HCT116 (cell line): ENCODE measurements at regions of chr5 and their contacts with region 1.

Region 1: GRCh38 chr5:34452170-34452830 is 203.8 kb upstream of the RAI14 start:
- DNase-seq: peak; percentile 34
- ATAC-seq: peak; percentile 63; the same call in 1 of the 2 replicates
- H3K4me3 ChIP-seq: no peak overlapping the region
- H3K27ac ChIP-seq: no peak overlapping the region
- H3K4me1 ChIP-seq: no peaks in the 10 kb centered on the region
- H3K27me3 ChIP-seq: no peaks in the 10 kb centered on the region
- CTCF ChIP-seq: peak; percentile 49 to 70 (median 62)
- POLR2A ChIP-seq: no peak
- RAD21 ChIP-seq: peak; percentile 82

Region 2: DNA sequence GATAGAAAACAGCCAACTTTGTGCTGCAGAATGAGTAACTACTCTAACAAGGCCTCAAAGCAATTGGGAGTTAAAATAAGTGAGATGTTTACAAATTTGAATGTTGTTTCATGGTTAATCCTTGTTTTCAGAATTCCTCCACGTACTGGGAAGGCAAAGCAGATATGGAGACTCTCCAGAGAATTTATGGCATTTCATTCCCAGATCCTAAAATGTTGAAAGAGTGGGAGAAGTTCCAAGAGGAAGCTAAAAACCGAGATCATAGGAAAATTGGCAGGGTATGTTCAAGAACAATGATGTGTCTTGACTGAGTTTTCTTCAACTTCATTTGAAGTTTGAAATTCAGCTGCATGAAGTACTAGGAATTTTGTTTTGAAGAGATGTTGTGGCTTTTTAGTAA is 995.2 kb before region 1 on chr5:
- CTCF ChIA-PET with region 1: no interaction called
- POLR2A ChIA-PET with region 1: no interaction called
- RAD21 ChIA-PET with region 1: no interaction called
- intact Hi-C with region 1: loop called (anchors 10 kb)
- DNase-seq: no peak
- ATAC-seq: no peak
- H3K4me3 ChIP-seq: no peak overlapping the region
- H3K27ac ChIP-seq: no peak overlapping the region
- H3K4me1 ChIP-seq: no peaks in the 10 kb centered on the region
- H3K27me3 ChIP-seq: no peaks in the 10 kb centered on the region
- CTCF ChIP-seq: no peak
- POLR2A ChIP-seq: no peak
- RAD21 ChIP-seq: no peak

Region 3: GRCh38 chr5:33608476-33609041 is 843.7 kb before region 1 on chr5:
- CTCF ChIA-PET with region 1: no interaction called
- POLR2A ChIA-PET with region 1: no interaction called
- RAD21 ChIA-PET with region 1: no interaction called
- intact Hi-C with region 1: loop called (anchors 10 kb)
- DNase-seq: no peak
- ATAC-seq: no peak
- H3K4me3 ChIP-seq: no peak overlapping the region
- H3K27ac ChIP-seq: no peak overlapping the region
- H3K4me1 ChIP-seq: no peaks in the 10 kb centered on the region
- H3K27me3 ChIP-seq: peaks cover 44% of the 10 kb centered on the region
- CTCF ChIP-seq: no peak
- POLR2A ChIP-seq: no peak
- RAD21 ChIP-seq: no peak

Region 4: DNA sequence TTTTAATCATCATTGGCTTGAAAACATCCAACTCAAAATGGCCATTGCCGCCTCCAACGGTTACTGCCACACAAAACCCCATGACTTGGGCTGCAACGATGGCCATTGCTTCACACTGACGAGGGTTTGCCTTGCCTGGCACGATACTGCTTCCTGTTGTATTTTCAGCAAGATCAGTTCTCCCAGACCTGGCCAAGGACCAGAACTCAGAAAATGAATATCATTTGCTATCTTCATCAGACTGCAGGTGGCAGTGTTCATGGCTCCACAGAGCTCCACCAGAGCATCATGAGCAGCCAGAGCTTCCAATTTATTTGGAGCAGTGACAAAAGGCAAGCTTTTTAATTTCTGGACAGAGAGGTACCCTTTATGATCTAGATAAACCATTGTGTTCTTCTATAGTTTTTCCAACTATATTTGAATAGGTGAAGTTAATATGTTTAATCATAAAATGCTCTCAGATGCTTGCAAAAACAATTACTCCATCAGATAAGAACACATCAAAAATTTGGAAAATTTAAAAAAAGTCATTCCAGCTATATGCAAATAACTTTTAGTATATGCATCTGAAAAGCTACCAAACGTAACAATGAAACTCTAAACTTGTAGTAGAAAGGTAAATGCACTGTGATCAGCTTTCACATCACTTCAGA is 454.8 kb before region 1 on chr5:
- CTCF ChIA-PET with region 1: no interaction called
- POLR2A ChIA-PET with region 1: no interaction called
- RAD21 ChIA-PET with region 1: no interaction called
- intact Hi-C with region 1: loop called (anchors 1 kb)
- DNase-seq: peak; percentile 19
- ATAC-seq: peak; percentile 80
- H3K4me3 ChIP-seq: no peak overlapping the region
- H3K27ac ChIP-seq: no peak overlapping the region
- H3K4me1 ChIP-seq: no peaks in the 10 kb centered on the region
- H3K27me3 ChIP-seq: no peaks in the 10 kb centered on the region
- CTCF ChIP-seq: peak; percentile 37 to 69 (median 66); a peak in 5 of 6 replicates
- POLR2A ChIP-seq: no peak
- RAD21 ChIP-seq: peak; percentile 49

Region 5: GRCh38 chr5:35671541-35672295 is 1219.4 kb after region 1 on chr5:
- CTCF ChIA-PET with region 1: no interaction called
- POLR2A ChIA-PET with region 1: no interaction called
- RAD21 ChIA-PET with region 1: no interaction called
- intact Hi-C with region 1: no loop called
- DNase-seq: no peak
- ATAC-seq: no peak
- H3K4me3 ChIP-seq: no peak overlapping the region
- H3K27ac ChIP-seq: no peak overlapping the region
- H3K4me1 ChIP-seq: no peaks in the 10 kb centered on the region
- H3K27me3 ChIP-seq: no peaks in the 10 kb centered on the region
- CTCF ChIP-seq: no peak
- POLR2A ChIP-seq: no peak
- RAD21 ChIP-seq: no peak